MCF 10A (cell line): ENCODE measurements at regions of chr16 and their contacts with region 1.

Region 1: DNA sequence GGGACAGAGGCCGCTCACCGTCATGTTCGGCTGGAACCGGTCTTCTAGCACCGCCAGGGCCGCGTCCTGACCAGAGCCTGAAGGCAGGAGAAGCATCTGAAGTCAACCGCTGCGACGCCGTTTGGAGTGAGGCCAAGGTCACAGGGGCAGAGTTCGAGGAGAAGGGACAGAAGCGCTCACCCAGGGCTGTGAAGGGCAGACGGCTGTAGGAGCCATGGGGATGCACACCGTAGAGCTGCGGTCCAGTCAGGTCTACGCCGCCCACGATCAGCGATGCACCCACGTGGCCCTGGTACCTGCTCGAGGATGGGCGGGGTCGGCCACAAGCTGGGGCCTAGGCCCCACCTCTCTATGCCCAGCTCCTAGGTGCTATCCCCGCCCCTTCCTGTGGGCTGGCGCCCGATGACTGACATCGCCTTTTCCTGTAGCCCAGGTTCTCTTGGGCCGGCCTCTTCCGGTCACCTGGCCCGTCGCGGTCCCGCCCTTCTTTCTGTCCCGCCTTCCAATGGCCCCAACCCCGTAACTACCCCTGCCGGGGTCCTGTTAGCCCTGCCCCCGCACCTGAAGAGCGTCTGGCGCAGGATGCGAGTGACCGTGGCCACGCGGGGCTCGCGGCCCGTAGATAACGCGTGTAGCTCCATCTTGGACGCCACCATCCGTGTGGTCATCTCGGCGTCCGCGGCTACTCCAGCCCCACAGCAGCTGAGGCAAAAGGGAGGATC is 1.1 kb downstream of the PSMB10 start:
- DNase-seq: peak; percentile 98
- H3K4me3 Mint-ChIP-seq: peak overlapping the region; percentile 100
- H3K27ac Mint-ChIP-seq: peak overlapping the region; percentile 98
- H3K4me1 Mint-ChIP-seq: peaks cover 32% of the 10 kb centered on the region
- H3K27me3 Mint-ChIP-seq: no peaks in the 10 kb centered on the region
- CTCF ChIP-seq: no peak

Region 2: GRCh38 chr16:67833418-67834241 is 101.9 kb before region 1 on chr16:
- CTCF ChIA-PET with region 1: interaction called, 3 read pairs
- POLR2A ChIA-PET with region 1: interaction called, 10 read pairs
- intact Hi-C with region 1: no loop called
- DNase-seq: peak; percentile 87
- H3K4me3 Mint-ChIP-seq: peak overlapping the region; percentile 93
- H3K27ac Mint-ChIP-seq: peak overlapping the region; percentile 91
- H3K4me1 Mint-ChIP-seq: peaks cover 9% of the 10 kb centered on the region
- H3K27me3 Mint-ChIP-seq: no peaks in the 10 kb centered on the region
- CTCF ChIP-seq: no peak

Region 3: DNA sequence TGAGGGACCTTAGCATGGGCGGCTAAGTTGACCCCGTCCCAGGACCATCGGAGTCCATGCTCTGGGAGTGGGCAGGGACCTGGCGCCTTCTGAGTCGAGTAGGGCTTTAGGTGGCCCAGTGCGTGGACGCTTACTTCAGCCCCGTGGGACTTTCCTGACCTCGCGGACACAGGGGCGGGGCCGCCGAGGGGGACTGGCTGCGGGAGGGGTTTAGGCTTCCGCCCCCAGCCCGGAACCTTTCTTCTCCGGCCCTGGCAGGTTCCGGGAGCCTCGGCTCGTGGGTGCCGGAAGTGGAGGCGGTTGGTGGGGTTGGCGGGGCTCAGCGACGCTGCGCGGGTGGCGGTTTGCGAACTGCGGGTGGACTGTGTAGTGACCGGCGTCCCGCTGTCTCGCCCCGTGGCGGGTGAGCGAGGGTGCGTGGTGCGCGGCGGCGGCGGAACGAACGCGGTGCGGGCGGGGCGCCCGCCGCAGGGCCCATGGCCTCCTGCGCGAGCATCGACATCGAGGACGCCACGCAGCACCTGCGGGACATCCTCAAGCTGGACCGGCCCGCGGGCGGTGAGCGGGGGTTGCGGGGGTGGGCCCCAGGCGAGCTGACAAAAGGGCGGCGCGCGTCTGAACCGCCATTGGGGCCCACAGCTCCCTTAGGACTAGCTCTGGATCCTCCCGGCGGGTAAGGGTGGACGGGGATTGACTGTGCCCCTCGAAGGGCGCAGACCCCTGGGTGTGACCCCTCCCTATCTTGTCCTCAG is 62.6 kb before region 1 on chr16 and contains the start of gene EDC4:
- CTCF ChIA-PET with region 1: interaction called, 3 read pairs
- POLR2A ChIA-PET with region 1: interaction called, 22 read pairs
- intact Hi-C with region 1: no loop called
- DNase-seq: peak; percentile 71
- H3K4me3 Mint-ChIP-seq: peak within 1 kb of the TSS; percentile 89
- H3K27ac Mint-ChIP-seq: peak within 1 kb of the TSS; percentile 94
- H3K4me1 Mint-ChIP-seq: peaks cover 34% of the 10 kb centered on the region
- H3K27me3 Mint-ChIP-seq: no peaks in the 10 kb centered on the region
- CTCF ChIP-seq: no peak
- total RNA-seq, gene EDC4: 50.9 and 51.3 TPM in 2 replicates

Region 4: GRCh38 chr16:67917852-67918236 is 17.7 kb before region 1 on chr16:
- CTCF ChIA-PET with region 1: interaction called, 11 read pairs
- POLR2A ChIA-PET with region 1: interaction called, 10 read pairs
- intact Hi-C with region 1: no loop called
- DNase-seq: peak; percentile 81
- H3K4me3 Mint-ChIP-seq: no peak overlapping the region
- H3K27ac Mint-ChIP-seq: peak overlapping the region; percentile 65
- H3K4me1 Mint-ChIP-seq: peaks cover 15% of the 10 kb centered on the region
- H3K27me3 Mint-ChIP-seq: no peaks in the 10 kb centered on the region
- CTCF ChIP-seq: no peak

Region 5: GRCh38 chr16:67968400-67969253 is 33.1 kb after region 1 on chr16 and contains the start of gene SLC12A4:
- CTCF ChIA-PET with region 1: interaction called, 6 read pairs
- POLR2A ChIA-PET with region 1: interaction called, 40 read pairs
- intact Hi-C with region 1: no loop called
- DNase-seq: peak; percentile 72
- H3K4me3 Mint-ChIP-seq: peak within 1 kb of the TSS; percentile 82
- H3K27ac Mint-ChIP-seq: peak within 1 kb of the TSS; percentile 77
- H3K4me1 Mint-ChIP-seq: peaks cover 26% of the 10 kb centered on the region
- H3K27me3 Mint-ChIP-seq: no peaks in the 10 kb centered on the region
- CTCF ChIP-seq: no peak
- total RNA-seq, gene SLC12A4: 107 TPM in 2 replicates

Region 6: DNA sequence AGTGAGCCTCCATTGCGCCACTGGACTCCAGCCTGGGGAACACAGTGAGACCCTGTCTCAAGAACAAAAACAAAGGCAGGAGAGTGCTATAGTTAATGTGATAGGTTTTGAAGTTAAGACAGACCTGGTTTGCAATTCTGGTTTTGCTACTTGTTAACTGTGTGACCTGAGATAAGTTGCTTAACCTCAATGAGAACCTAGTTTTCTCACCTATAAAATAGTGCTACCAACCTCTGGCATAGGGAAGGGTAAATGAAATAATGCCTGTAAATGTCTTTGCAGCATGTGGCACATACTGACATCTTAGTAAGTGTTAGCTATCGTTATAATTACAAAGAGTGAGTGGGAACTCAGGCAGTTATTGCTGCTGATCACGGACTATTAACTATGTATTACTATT is 119.8 kb after region 1 on chr16:
- CTCF ChIA-PET with region 1: no interaction called
- POLR2A ChIA-PET with region 1: no interaction called
- intact Hi-C with region 1: no loop called
- DNase-seq: no peak
- H3K4me3 Mint-ChIP-seq: no peak overlapping the region
- H3K27ac Mint-ChIP-seq: no peak overlapping the region
- H3K4me1 Mint-ChIP-seq: no peaks in the 10 kb centered on the region
- H3K27me3 Mint-ChIP-seq: no peaks in the 10 kb centered on the region
- CTCF ChIP-seq: no peak

Region 7: DNA sequence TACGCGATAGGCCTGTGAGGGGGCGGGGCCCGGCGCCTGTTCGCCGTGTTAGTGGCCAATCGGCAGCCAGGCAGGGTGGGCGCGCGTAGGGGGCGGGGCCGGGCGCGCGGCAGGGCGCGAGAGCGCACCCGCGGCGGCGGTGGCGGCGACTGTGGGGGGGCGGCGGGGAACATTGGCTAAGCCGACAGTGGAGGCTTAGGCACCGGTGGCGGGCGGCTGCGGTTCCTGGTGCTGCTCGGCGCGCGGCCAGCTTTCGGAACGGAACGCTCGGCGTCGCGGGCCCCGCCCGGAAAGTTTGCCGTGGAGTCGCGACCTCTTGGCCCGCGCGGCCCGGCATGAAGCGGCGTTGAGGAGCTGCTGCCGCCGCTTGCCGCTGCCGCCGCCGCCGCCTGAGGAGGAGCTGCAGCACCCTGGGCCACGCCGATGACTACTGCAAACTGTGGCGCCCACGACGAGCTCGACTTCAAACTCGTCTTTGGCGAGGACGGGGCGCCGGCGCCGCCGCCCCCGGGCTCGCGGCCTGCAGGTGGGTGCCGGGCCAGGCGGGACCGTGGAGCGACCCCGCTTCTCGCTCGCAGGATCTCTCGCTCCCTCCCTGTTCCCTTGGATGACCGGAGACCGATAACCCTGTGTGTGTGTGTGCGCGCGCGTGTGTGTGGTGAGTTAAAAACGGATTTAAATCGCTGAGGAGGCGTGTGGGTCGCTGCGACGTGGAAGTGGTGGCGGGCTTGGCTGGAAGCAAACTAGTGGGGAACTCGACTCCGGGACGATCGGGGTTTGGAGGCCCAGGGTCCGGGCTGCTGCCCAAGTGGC is 149.9 kb after region 1 on chr16 and contains the start of gene NFATC3:
- CTCF ChIA-PET with region 1: no interaction called
- POLR2A ChIA-PET with region 1: interaction called, 20 read pairs
- intact Hi-C with region 1: no loop called
- DNase-seq: peak; percentile 94
- H3K4me3 Mint-ChIP-seq: peak within 1 kb of the TSS; percentile 80
- H3K27ac Mint-ChIP-seq: peak within 1 kb of the TSS; percentile 35
- H3K4me1 Mint-ChIP-seq: peaks cover 23% of the 10 kb centered on the region
- H3K27me3 Mint-ChIP-seq: no peaks in the 10 kb centered on the region
- CTCF ChIP-seq: no peak
- total RNA-seq, gene NFATC3: 18.5 and 24.1 TPM in 2 replicates